Naive thymus-derived CD4-positive, alpha-beta T cell (primary cell): ENCODE measurements at regions of chr14 and their contacts with region 1.

Region 1: DNA sequence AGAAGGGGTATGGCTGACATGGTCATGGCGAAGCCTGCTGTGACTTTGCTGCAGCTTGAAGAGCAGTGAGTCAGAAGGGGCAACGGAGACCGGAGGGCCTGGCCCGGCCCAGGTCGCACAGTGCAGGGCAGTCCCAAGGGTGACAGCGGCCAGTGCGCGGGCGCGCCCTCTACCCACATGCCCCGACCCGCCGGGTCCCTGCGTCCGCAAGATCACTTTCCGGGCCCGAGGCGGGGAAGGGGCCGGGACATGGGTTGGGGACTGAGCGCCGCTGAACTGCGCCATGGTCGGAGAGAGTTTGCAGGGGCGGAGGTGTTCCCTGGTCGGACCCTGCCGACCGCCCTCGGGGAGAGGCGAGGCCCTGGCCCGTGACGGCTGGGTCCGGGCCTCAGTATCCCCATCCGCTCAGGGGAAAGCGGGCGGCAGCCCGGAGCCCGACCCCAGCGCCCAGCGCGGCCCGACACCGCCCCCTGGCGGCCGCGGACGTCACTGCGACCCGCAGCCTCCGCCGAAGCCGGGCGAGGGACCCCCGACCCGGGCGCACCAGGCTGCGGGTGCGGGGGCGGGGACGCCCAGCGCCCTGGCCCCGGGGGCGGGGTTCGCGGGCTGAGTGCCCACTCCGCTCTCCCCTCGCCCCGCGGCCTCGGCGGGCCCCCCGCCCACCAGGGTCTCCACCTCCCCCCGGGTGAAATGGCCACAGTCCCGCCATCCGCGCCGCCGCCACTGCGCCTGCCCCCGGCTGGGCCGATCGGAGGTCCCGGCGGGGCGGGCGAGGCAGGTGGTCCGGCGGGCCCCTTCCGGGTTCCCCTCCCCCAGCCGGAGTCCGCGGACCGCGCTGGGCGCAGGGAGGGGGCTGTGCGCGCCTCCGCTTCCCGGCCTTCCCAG is 7.2 kb upstream of the ANKRD9 start:
- DNase-seq: peak; percentile 32 to 85 (median 58)
- ATAC-seq: peak; percentile 90
- H3K4me3 ChIP-seq: peak overlapping the region; percentile 61
- H3K4me3 Mint-ChIP-seq: peak overlapping the region; percentile 79 to 91 (median 86)
- H3K27ac ChIP-seq: peak overlapping the region; percentile 35
- H3K27ac Mint-ChIP-seq: peak overlapping the region in 4 of 9 donors; percentile 32 to 86 (median 58)
- H3K4me1 ChIP-seq: peaks cover 0 to 3% of the 10 kb centered on the region in 2 donors
- H3K4me1 Mint-ChIP-seq: peaks cover 3 to 6% (median 5%) of the 10 kb centered on the region in 7 donors
- H3K27me3 ChIP-seq: no peaks in the 10 kb centered on the region
- H3K27me3 Mint-ChIP-seq: peaks cover 0 to 8% (median 4%) of the 10 kb centered on the region in 5 donors

Region 2: DNA sequence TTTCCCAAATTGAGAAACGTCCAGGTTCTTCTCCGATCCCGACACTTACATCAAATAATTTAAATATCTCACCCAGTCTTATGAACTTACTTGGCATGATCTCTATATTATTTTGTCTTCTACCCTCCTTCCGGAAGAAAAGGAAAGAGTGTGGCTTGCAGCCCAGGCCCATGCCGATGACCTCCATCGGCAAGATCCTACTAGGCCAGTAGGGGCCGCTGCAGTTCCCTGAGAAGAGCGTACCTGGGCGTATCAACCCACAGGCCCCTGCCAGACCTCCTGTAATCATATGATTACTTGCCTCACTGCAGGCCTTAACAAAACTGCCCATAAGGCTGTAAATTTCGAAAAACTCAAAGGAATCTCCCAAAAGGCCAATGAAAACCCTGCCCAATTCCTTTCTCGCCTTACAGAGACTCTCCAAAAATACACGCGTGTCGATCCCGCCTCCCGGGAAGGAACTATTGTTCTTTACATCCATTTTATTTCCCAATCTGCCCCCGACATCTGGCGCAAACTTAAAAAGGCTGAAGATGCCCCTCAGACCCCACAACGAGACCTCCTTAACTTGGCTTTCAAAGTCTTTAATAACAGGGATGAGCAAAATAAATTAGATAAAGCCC is 281.4 kb before region 1 on chr14:
- CTCF ChIA-PET with region 1: no interaction called
- POLR2A ChIA-PET with region 1: no interaction called
- intact Hi-C with region 1: loop called in 1 of 2 experiments (anchors 2 kb)
- DNase-seq: peak; percentile 39 to 77 (median 67)
- ATAC-seq: peak; percentile 91
- H3K4me3 ChIP-seq: no peak overlapping the region
- H3K4me3 Mint-ChIP-seq: no peak overlapping the region
- H3K27ac ChIP-seq: no peak overlapping the region
- H3K27ac Mint-ChIP-seq: no peak overlapping the region
- H3K4me1 ChIP-seq: no peaks in the 10 kb centered on the region
- H3K4me1 Mint-ChIP-seq: no peaks in the 10 kb centered on the region
- H3K27me3 ChIP-seq: no peaks in the 10 kb centered on the region
- H3K27me3 Mint-ChIP-seq: no peaks in the 10 kb centered on the region

Region 3: GRCh38 chr14:102362545-102363181 is 154.1 kb before region 1 on chr14 and contains the starts of genes CINP and TECPR2:
- CTCF ChIA-PET with region 1: no interaction called
- POLR2A ChIA-PET with region 1: no interaction called
- intact Hi-C with region 1: loop called in 1 of 2 experiments (anchors 5 kb)
- DNase-seq: peak; percentile 88 to 95 (median 92)
- ATAC-seq: peak; percentile 97
- H3K4me3 ChIP-seq: peak within 1 kb of the TSS; percentile 96
- H3K4me3 Mint-ChIP-seq: peak within 1 kb of the TSS in 6 of 10 donors; percentile 92 to 97 (median 95)
- H3K27ac ChIP-seq: peak within 1 kb of the TSS; percentile 87
- H3K27ac Mint-ChIP-seq: peak within 1 kb of the TSS; percentile 82 to 99 (median 96)
- H3K4me1 ChIP-seq: peaks cover 6 to 15% of the 10 kb centered on the region in 2 donors
- H3K4me1 Mint-ChIP-seq: peaks cover 17 to 42% (median 36%) of the 10 kb centered on the region in 7 donors
- H3K27me3 ChIP-seq: no peaks in the 10 kb centered on the region
- H3K27me3 Mint-ChIP-seq: no peaks in the 10 kb centered on the region
- total RNA-seq, gene CINP: 16.8 to 34.4 (median 31.8) TPM
- total RNA-seq, gene TECPR2: 8.7 to 12.9 (median 11.4) TPM

Region 4: DNA sequence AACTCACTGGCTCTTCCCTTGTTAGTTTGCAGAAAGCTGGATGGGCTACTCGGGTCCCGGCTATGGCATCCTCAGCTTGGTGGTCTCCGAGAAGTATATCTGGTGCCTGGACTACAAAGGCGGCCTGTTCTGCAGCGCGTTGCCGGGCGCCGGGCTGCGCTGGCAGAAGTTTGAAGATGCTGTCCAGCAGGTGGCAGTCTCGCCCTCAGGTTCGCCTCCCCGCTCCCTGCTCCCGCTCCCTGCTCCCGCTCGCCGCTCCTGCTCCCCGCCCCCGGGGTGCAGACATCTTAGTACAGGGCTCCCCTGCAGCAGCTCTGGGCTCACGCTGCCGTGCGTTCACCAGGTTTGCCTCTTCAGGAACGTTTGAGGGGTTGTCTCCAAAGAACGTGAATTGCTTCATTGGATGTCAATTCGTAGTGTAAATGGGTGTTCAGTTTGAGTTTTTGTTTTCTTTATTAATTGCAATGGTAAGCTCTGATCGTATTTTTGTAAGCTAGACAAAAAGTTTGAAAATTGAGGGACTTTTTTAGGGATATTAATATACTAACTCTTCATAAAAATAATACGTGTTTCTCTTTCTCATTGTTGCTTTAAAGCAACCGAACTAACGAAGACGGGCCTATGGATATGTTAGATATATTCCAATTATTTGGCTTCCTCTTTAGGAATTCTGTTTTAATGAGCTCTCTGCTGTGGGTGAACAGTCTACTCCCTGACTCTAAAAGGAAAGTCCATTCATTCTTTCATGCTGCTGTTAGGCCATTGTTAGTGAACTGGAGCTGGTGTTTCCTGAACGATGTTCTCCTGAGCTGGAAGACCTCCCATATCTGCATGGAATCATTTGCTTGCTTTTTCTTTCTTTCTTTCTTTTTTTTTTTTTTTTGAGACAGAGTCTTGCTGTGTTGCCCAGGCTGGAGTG is 78.5 kb before region 1 on chr14:
- CTCF ChIA-PET with region 1: interaction called, 14 read pairs
- POLR2A ChIA-PET with region 1: interaction called, 7 read pairs
- intact Hi-C with region 1: loop called in 1 of 2 experiments (anchors 1 kb)
- DNase-seq: peak; percentile 16 to 72 (median 49)
- ATAC-seq: peak; percentile 95
- H3K4me3 ChIP-seq: no peak overlapping the region
- H3K4me3 Mint-ChIP-seq: peak overlapping the region in 1 of 10 donors; percentile 68
- H3K27ac ChIP-seq: no peak overlapping the region
- H3K27ac Mint-ChIP-seq: no peak overlapping the region
- H3K4me1 ChIP-seq: peaks cover 0 to 5% of the 10 kb centered on the region in 2 donors
- H3K4me1 Mint-ChIP-seq: peaks cover 0 to 8% (median 0%) of the 10 kb centered on the region in 7 donors
- H3K27me3 ChIP-seq: no peaks in the 10 kb centered on the region
- H3K27me3 Mint-ChIP-seq: no peaks in the 10 kb centered on the region

Region 5: DNA sequence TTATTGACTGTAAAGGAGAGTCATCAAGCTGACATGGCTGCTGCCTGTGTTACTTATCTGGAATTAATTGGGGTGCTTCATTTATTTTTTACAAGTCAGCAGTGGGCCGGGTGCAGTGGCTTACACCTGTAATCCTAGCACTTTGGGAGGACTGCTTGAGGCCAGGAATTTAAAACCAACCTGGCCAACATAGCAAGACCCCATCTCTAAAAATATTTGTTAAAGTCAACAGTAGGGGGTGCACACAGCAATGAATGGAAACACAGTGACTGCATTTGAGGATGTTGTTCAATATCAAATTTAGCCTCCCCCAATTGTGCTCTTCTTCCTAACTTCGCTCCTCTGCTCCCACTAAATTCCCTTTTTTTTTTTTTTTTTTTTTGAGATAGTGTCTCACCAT is 59.3 kb before region 1 on chr14:
- CTCF ChIA-PET with region 1: no interaction called
- POLR2A ChIA-PET with region 1: no interaction called
- intact Hi-C with region 1: loop called in 1 of 2 experiments (anchors 1 kb)
- DNase-seq: no peak
- ATAC-seq: no peak
- H3K4me3 ChIP-seq: no peak overlapping the region
- H3K4me3 Mint-ChIP-seq: no peak overlapping the region
- H3K27ac ChIP-seq: no peak overlapping the region
- H3K27ac Mint-ChIP-seq: no peak overlapping the region
- H3K4me1 ChIP-seq: no peaks in the 10 kb centered on the region
- H3K4me1 Mint-ChIP-seq: peaks cover 0 to 7% (median 2%) of the 10 kb centered on the region in 7 donors
- H3K27me3 ChIP-seq: no peaks in the 10 kb centered on the region
- H3K27me3 Mint-ChIP-seq: no peaks in the 10 kb centered on the region

Region 6: GRCh38 chr14:102840756-102841528 is 324.2 kb after region 1 on chr14:
- CTCF ChIA-PET with region 1: no interaction called
- POLR2A ChIA-PET with region 1: no interaction called
- intact Hi-C with region 1: no loop called
- DNase-seq: no peak
- ATAC-seq: peak; percentile 52
- H3K4me3 ChIP-seq: no peak overlapping the region
- H3K4me3 Mint-ChIP-seq: no peak overlapping the region
- H3K27ac ChIP-seq: no peak overlapping the region
- H3K27ac Mint-ChIP-seq: peak overlapping the region in 4 of 9 donors; percentile 36 to 58 (median 52)
- H3K4me1 ChIP-seq: no peaks in the 10 kb centered on the region
- H3K4me1 Mint-ChIP-seq: peaks cover 5 to 21% (median 15%) of the 10 kb centered on the region in 7 donors
- H3K27me3 ChIP-seq: no peaks in the 10 kb centered on the region
- H3K27me3 Mint-ChIP-seq: no peaks in the 10 kb centered on the region